Left lung (tissue), 14 donors: ENCODE measurements at regions of chr16 and their contacts with region 1.

Region 1: GRCh38 chr16:56317998-56318826 is 107.1 kb downstream of the AMFR start:
- DNase-seq: peak; percentile 63 to 96 (median 92)
- ATAC-seq: peak; percentile 99
- H3K4me3 ChIP-seq: no peak overlapping the region
- H3K27ac ChIP-seq: no peak overlapping the region
- H3K4me1 ChIP-seq: peaks cover 3 to 7% of the 10 kb centered on the region in 2 donors
- H3K27me3 ChIP-seq: peaks cover 0 to 8% of the 10 kb centered on the region in 2 donors
- CTCF ChIP-seq: peak; percentile 72 to 94

Region 2: DNA sequence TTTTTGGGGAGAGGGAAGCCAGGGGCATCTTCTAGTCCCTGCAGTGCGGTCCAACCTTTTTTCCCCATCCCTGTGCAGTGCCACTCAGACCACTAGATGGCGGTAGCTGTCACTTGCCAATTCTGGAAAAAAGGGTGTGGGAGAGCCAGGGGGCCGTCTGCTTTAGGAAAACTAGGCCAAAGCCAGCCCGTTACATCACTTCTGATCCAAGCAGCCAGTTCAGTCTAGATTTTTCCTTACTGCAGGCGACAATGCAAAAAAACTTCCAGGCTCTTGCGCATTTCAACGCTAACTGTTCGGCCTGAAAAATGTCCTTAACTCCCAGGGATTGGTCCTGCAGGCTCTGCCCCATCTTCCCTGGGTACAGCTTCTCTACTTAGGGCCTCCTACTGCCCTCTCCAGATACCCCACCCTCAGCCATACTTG is 373.8 kb before region 1 on chr16:
- intact Hi-C with region 1: loop called in 1 of 2 experiments (anchors 10 kb)
- DNase-seq: peak in 3 of 4 donors; percentile 57 to 94 (median 87)
- ATAC-seq: peak; percentile 96
- H3K4me3 ChIP-seq: no peak overlapping the region
- H3K27ac ChIP-seq: no peak overlapping the region
- H3K4me1 ChIP-seq: no peaks in the 10 kb centered on the region
- H3K27me3 ChIP-seq: peaks cover 0 to 19% of the 10 kb centered on the region in 2 donors
- CTCF ChIP-seq: peak; percentile 90 to 96

Region 3: GRCh38 chr16:56425439-56425832 is 107.2 kb after region 1 on chr16 and contains the start of gene AMFR:
- intact Hi-C with region 1: no loop called
- DNase-seq: peak; percentile 59 to 92 (median 78)
- ATAC-seq: peak; percentile 98
- H3K4me3 ChIP-seq: peak within 1 kb of the TSS; percentile 75 to 82
- H3K27ac ChIP-seq: peak within 1 kb of the TSS; percentile 70
- H3K4me1 ChIP-seq: peaks cover 0 to 23% of the 10 kb centered on the region in 2 donors
- H3K27me3 ChIP-seq: no peaks in the 10 kb centered on the region
- CTCF ChIP-seq: peak; percentile 36 to 58
- polyA plus RNA-seq, gene AMFR: 64.2 to 88.5 (median 68.9) TPM

Region 4: DNA sequence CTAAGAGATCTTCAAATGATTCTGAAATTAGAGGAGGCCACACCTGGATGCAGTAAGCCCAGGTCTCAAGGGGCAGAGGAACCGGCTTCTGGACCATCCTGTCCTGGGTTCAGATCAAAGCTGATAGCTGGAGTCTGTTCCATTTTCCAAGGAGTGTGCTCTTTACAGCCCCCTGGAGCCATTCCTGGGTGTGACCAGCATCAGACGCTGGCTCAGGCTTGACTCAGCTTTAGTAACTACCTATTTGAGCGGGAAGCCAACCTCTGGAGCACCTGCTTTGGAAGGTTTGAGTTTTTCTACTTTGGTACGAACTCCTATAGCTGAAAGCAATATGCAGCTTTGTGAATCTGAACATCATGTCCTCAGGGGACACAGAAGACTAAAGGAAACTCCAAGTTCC is 214.5 kb after region 1 on chr16:
- intact Hi-C with region 1: no loop called
- DNase-seq: no peak
- ATAC-seq: no peak
- H3K4me3 ChIP-seq: no peak overlapping the region
- H3K27ac ChIP-seq: no peak overlapping the region
- H3K4me1 ChIP-seq: no peaks in the 10 kb centered on the region
- H3K27me3 ChIP-seq: peaks cover 0 to 5% of the 10 kb centered on the region in 2 donors
- CTCF ChIP-seq: no peak